Adrenal gland (tissue), 19 donors: ENCODE measurements at regions of chr5 and their contacts with region 1.

Region 1: DNA sequence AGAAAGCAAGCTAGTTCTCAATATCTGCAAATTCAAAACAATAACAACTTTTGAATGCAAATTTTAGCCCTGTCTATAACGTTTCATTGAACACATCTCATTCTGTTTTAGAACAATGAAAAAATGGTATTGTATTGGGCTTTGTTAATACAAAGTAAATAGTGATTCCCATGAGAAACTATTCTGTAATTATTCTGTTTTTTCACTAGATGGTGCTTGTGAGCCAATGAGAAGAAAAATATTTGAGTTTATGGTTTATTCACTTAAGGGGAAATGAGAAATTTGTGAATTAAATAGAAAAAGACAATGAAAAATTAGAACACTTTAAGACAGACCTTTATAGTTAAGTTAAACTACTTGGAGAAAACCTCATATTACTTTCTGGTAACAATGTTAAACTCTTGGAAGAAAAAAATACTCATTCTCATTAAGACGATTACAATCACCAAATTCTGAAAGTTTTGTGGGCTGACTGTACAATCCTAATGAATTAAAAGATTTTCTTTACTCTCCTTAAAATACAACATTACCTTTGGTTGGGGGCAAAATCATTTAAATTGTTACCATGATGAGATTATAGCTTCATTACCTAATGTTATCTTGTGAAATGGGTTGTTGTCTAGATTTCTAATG is 127.0 kb downstream of the NNT start:
- DNase-seq: no peak
- H3K4me3 ChIP-seq: no peak overlapping the region
- H3K27ac ChIP-seq: no peak overlapping the region
- H3K4me1 ChIP-seq: no peaks in the 10 kb centered on the region
- H3K27me3 ChIP-seq: no peaks in the 10 kb centered on the region
- CTCF ChIP-seq: peak; percentile 27 to 72 (median 54)
- POLR2A ChIP-seq: no peak

Region 2: DNA sequence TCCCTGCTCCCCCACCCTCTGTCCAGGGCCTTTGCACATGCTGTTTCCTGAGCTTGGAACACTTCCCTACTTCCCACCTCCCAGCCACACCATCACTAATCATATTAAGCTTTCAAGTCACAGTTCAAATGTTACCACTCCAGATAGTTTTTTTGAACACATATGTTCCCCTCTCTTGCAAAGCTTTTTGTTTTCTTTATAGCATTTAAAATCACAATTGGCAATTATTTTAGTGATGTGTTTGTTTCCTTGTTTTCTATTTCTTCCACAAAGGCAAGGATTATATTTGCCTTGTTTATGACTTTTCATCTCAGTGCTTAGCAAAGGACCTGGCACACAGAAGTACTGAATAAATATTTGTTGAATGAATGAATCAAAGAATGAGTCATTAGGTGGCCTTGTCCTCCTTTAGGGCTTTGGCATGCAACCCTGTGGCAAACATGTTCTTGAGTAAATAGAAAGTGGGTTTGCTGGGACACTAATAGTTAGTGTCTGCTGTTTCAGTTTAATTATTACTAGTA is 272.5 kb after region 1 on chr5:
- intact Hi-C with region 1: no loop called
- DNase-seq: peak; percentile 43 to 64 (median 56)
- H3K4me3 ChIP-seq: no peak overlapping the region
- H3K27ac ChIP-seq: no peak overlapping the region
- H3K4me1 ChIP-seq: peaks cover 6 to 7% of the 10 kb centered on the region in 2 donors
- H3K27me3 ChIP-seq: no peaks in the 10 kb centered on the region
- CTCF ChIP-seq: no peak
- POLR2A ChIP-seq: no peak

Region 3: GRCh38 chr5:44332285-44332971 is 602.5 kb after region 1 on chr5:
- intact Hi-C with region 1: loop called in 1 of 2 experiments (anchors 10 kb)
- DNase-seq: no peak
- H3K4me3 ChIP-seq: no peak overlapping the region
- H3K27ac ChIP-seq: no peak overlapping the region
- H3K4me1 ChIP-seq: no peaks in the 10 kb centered on the region
- H3K27me3 ChIP-seq: no peaks in the 10 kb centered on the region
- CTCF ChIP-seq: peak; percentile 40 to 63 (median 52)
- POLR2A ChIP-seq: no peak

Region 4: GRCh38 chr5:44774279-44774880 is 1044.4 kb after region 1 on chr5:
- intact Hi-C with region 1: loop called in 1 of 2 experiments (anchors 10 kb)
- DNase-seq: peak in 2 of 7 donors; percentile 4 to 14
- H3K4me3 ChIP-seq: no peak overlapping the region
- H3K27ac ChIP-seq: no peak overlapping the region
- H3K4me1 ChIP-seq: no peaks in the 10 kb centered on the region
- H3K27me3 ChIP-seq: no peaks in the 10 kb centered on the region
- CTCF ChIP-seq: peak; percentile 35 to 64 (median 54)
- POLR2A ChIP-seq: no peak